GM23248 (cell line): ENCODE measurements at regions of chr1 and their contacts with region 1.

Region 1: DNA sequence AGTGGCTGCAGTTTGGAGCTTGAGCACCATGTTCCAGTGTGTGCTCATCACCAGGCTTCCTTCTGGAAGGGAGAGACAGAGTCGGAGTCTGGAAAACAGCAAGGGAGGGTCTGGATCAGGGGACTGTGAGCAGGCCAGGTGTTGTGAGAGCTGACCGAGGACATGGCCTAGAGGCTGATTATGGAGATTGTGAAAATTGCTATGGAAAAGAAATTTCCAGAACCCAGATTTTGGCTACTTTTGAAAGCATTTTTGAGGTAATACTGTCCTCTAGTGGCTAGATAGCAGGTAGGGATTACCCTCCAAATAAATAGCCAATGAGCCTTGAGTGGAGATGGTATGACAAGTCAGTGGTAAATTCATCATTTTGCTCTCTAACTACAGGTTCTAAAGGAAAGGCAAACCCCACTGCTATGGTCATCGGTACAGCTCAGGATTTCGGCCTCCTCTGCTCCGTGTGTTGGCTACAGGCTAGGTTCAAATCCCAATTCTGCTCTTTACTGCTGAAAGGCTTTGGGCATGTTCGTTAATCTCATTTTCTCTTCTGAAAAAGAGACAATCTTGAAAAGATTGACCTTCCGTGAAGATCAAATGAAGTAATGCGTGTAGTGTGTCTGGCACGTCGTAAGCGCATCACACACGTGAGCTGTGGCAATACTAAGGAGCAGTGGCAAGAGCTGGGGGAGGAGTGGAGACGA is 1.0 kb upstream of the HAO2 start:
- DNase-seq: peak; percentile 80
- H3K4me3 ChIP-seq: no peak overlapping the region
- H3K27ac ChIP-seq: no peak overlapping the region
- H3K4me1 ChIP-seq: peaks cover 8% of the 10 kb centered on the region
- H3K27me3 ChIP-seq: peaks cover 9% of the 10 kb centered on the region; the same call in 1 of the 2 replicates

Region 2: DNA sequence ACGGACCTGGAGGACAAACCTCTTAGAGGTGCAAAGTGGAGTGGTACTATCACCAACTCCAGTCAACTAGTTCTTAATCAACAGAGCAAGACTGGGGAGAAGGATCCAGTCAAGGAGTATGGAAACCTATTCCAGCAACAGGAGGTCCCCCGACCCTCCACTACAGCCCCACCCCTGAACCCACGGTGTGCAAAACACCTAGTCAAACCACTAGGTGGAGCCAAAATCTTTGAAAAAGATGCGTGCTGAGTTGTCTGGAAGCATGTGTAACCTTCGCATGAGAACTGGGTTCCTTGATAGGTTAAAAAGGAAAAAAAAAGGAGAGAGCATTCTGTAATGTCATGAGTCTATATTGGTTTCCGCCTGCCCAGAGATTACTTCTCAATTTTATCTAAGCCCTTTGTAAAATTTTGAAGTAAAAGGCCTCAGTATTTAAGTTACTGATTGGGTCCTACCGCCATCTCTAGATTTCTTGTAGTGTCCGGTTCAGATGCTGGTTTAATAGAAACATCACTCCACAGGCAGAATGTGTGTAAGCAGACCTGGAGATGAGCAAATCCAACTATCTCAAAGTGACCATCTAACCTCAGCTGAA is 80.9 kb before region 1 on chr1:
- in situ Hi-C with region 1: loop called (anchors 10 kb)
- DNase-seq: peak; percentile 63
- H3K4me3 ChIP-seq: no peak overlapping the region
- H3K27ac ChIP-seq: no peak overlapping the region
- H3K4me1 ChIP-seq: peaks cover 12% of the 10 kb centered on the region
- H3K27me3 ChIP-seq: no peaks in the 10 kb centered on the region